ENCODE measurements at regions of chr17 and their contacts with region 1.

Region 1: GRCh38 chr17:77363821-77364361 is 223.1 kb downstream of the SEC14L1 start:
- DNase-seq: peak in 7 of 10 donors; percentile 47 to 57 (median 55)
- ATAC-seq: peak; percentile 89
- H3K4me3 Mint-ChIP-seq: peak overlapping the region; percentile 64 to 90 (median 78)
- H3K27ac Mint-ChIP-seq: peak overlapping the region; percentile 56 to 91 (median 82)
- H3K4me1 Mint-ChIP-seq: peaks cover 34 to 59% (median 58%) of the 10 kb centered on the region in 4 donors
- H3K27me3 Mint-ChIP-seq: no peaks in the 10 kb centered on the region

Region 2: GRCh38 chr17:77054936-77055335 is 309.0 kb before region 1 on chr17:
- POLR2A ChIA-PET with region 1: no interaction called
- DNase-seq: no peak
- ATAC-seq: no peak
- H3K4me3 Mint-ChIP-seq: no peak overlapping the region
- H3K27ac Mint-ChIP-seq: peak overlapping the region in 1 of 10 donors; percentile 57
- H3K4me1 Mint-ChIP-seq: peaks cover 0 to 6% (median 2%) of the 10 kb centered on the region in 4 donors
- H3K27me3 Mint-ChIP-seq: peaks cover 9 to 26% (median 15%) of the 10 kb centered on the region in 5 donors

Region 3: DNA sequence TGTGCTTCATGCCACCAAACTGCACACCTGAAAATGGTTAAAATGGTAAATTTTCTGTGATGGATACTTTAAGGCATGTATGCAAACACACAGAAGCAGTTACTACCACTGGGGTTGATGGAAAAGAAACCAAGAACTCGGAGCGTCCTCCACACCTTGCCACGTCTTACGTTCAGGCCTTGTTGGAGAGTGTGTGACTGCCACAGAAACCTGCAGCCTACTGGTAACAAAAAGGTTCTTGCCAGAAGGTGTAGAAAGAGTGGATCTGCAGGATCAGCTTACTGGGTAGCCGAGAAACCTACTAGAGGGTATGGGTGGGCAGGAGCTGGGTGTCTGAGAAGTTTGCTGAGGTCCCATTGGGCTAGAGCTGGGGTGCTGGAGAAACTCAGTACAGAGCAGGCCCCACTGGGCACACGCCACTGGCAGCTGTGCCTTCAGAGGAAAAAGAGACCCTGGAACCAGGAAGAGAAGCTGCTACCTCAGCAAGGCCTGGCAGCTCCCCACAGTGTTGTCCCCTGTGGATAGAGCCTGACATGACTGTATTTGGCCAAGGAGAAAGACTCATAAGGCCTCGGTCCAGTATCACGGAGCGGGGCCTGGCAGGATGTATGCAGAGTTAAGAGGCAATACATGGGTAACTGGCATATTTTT is 18.5 kb before region 1 on chr17:
- POLR2A ChIA-PET with region 1: interaction called, 10 read pairs
- DNase-seq: no peak
- ATAC-seq: no peak
- H3K4me3 Mint-ChIP-seq: no peak overlapping the region
- H3K27ac Mint-ChIP-seq: peak overlapping the region in 6 of 10 donors; percentile 0 to 65 (median 48)
- H3K4me1 Mint-ChIP-seq: peaks cover 33 to 53% (median 49%) of the 10 kb centered on the region in 4 donors
- H3K27me3 Mint-ChIP-seq: no peaks in the 10 kb centered on the region

Region 4: GRCh38 chr17:77409282-77410161 is 45.6 kb after region 1 on chr17:
- POLR2A ChIA-PET with region 1: no interaction called
- DNase-seq: peak in 7 of 10 donors; percentile 35 to 65 (median 56)
- ATAC-seq: peak; percentile 32 to 80
- H3K4me3 Mint-ChIP-seq: peak overlapping the region; percentile 45 to 98 (median 64)
- H3K27ac Mint-ChIP-seq: peak overlapping the region; percentile 80 to 100 (median 92)
- H3K4me1 Mint-ChIP-seq: peaks cover 50 to 91% (median 87%) of the 10 kb centered on the region in 4 donors
- H3K27me3 Mint-ChIP-seq: no peaks in the 10 kb centered on the region

Measured in naive thymus-derived CD8-positive, alpha-beta T cell (primary cell).